Mammary epithelial cell (primary cell): ENCODE measurements at regions of chr1 and their contacts with region 1.

Region 1: DNA sequence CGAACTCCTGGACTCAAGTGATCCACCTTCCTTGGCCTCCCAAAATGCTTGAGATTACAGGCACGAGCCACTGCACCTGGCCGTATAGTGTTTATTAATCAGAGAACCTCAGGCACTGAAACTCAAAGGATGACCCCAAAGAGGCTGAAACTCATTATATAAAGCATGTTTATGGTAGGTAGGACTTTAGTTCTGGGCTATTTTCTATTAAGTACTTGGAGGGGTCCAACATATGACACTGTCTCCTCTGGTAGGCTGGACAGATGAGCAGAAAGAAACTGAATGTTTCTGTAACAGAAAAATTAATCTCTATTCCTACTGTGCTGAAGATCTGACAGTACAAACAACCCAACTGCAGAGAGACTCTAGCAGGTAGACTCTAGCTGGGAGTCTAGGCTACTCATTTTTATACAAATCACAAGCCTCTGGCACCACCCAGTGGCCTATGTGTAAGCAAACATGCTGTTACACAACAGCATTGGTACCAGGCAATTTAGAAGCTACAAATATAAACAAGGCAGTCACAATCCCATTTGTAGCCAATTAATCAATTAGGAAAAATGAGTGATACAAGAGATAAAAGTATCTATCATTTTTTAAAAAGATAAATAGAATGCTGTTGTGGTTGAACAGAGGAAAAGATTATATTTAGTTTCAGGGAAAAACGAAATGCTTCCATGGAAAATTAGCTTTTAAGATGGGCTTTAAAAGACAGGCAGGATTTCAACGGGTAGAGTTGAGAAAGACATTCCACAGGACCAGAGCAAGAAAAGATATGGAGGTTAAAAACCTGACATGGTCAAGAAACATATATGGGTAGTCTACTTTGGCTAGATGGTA is 10.4 kb downstream of the DCAF8 start:
- DNase-seq: peak; percentile 50
- H3K4me3 ChIP-seq: no peak overlapping the region
- H3K27ac ChIP-seq: no peak overlapping the region
- H3K4me1 ChIP-seq: peaks cover 8% of the 10 kb centered on the region
- H3K27me3 ChIP-seq: no peaks in the 10 kb centered on the region
- CTCF ChIP-seq: peak; percentile 81 to 83

Region 2: DNA sequence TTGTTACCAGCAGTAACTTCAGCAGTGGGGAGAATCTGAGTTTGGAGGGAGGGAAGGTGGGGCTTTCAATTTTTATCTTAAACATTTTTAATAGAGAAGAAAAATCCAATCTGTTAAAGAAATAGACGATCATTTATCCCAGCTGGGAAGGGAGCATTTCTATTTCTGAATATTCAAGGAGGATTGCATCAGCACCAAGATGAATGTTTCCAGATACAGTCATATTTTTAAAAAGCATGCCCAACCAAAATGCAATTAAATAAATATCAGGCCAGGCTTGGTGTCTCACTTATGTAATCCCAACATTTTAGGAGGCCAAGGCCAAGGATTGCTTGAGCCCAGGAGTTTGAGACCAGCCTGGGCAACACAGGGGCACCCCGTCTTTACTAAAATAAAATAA is 102.2 kb before region 1 on chr1:
- CTCF ChIA-PET with region 1: no interaction called
- dilution Hi-C with region 1: no loop called
- in situ Hi-C with region 1: no loop called
- intact Hi-C with region 1: no loop called
- DNase-seq: no peak
- H3K4me3 ChIP-seq: no peak overlapping the region
- H3K27ac ChIP-seq: no peak overlapping the region
- H3K4me1 ChIP-seq: no peaks in the 10 kb centered on the region
- H3K27me3 ChIP-seq: no peaks in the 10 kb centered on the region
- CTCF ChIP-seq: no peak

Region 3: GRCh38 chr1:160161965-160162705 is 89.8 kb before region 1 on chr1:
- CTCF ChIA-PET with region 1: no interaction called
- dilution Hi-C with region 1: no loop called
- in situ Hi-C with region 1: no loop called
- intact Hi-C with region 1: loop called (anchors 1 kb)
- DNase-seq: no peak
- H3K4me3 ChIP-seq: no peak overlapping the region
- H3K27ac ChIP-seq: no peak overlapping the region
- H3K4me1 ChIP-seq: no peaks in the 10 kb centered on the region
- H3K27me3 ChIP-seq: no peaks in the 10 kb centered on the region
- CTCF ChIP-seq: peak; percentile 27 to 48

Region 4: GRCh38 chr1:160219062-160219929 is 32.6 kb before region 1 on chr1:
- CTCF ChIA-PET with region 1: interaction called, 7 read pairs
- dilution Hi-C with region 1: loop called (anchors 5 kb)
- in situ Hi-C with region 1: no loop called
- intact Hi-C with region 1: loop called (anchors 1 kb)
- DNase-seq: peak; percentile 71
- H3K4me3 ChIP-seq: no peak overlapping the region
- H3K27ac ChIP-seq: peak overlapping the region; percentile 63
- H3K4me1 ChIP-seq: peaks cover 47% of the 10 kb centered on the region
- H3K27me3 ChIP-seq: no peaks in the 10 kb centered on the region
- CTCF ChIP-seq: peak; percentile 46 to 66

Region 5: GRCh38 chr1:160291248-160292220 is 39.6 kb after region 1 on chr1:
- CTCF ChIA-PET with region 1: no interaction called
- dilution Hi-C with region 1: loop called (anchors 5 kb)
- in situ Hi-C with region 1: no loop called
- intact Hi-C with region 1: no loop called
- DNase-seq: peak; percentile 51
- H3K4me3 ChIP-seq: no peak overlapping the region
- H3K27ac ChIP-seq: no peak overlapping the region
- H3K4me1 ChIP-seq: no peaks in the 10 kb centered on the region
- H3K27me3 ChIP-seq: no peaks in the 10 kb centered on the region
- CTCF ChIP-seq: peak; percentile 78 to 84

Region 6: DNA sequence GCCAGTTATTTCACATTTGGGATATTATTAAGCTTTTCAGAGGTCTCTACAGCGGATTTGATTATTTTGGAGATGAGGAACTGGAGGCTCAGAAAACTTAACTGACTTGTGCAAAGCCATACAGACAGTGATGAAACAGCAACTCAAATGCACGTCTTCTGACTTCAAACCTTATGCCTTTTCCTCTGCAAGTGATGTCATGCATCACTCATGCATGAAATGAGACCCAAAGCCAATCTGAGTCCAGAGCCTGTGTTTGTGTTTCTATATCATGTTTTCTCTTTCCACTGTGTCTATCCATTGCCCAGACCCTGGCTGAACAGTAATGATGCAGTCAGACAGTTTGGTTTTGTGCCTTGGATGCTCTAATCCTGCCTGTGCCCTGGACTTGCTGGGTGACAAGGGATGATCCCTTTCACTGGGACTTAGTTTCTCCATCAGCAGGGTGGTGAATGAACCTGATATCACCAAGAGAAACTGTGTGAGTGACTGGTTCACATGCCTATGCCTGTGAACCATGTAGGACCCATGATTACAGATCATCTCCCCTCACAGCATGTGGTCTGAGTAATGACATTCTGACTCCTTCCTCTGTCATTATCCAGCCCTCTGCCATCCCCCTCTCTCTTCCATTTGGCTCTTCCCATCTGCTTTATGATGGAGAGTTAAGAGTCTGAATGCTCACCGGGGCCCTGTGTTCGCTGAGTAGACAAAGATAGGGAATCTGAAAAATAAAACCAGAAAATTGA is 237.8 kb after region 1 on chr1:
- CTCF ChIA-PET with region 1: no interaction called
- dilution Hi-C with region 1: no loop called
- in situ Hi-C with region 1: no loop called
- intact Hi-C with region 1: no loop called
- DNase-seq: no peak
- H3K4me3 ChIP-seq: no peak overlapping the region
- H3K27ac ChIP-seq: no peak overlapping the region
- H3K4me1 ChIP-seq: no peaks in the 10 kb centered on the region
- H3K27me3 ChIP-seq: no peaks in the 10 kb centered on the region
- CTCF ChIP-seq: no peak

Region 7: GRCh38 chr1:160615660-160616059 is 363.8 kb after region 1 on chr1:
- CTCF ChIA-PET with region 1: interaction called, 14 read pairs
- dilution Hi-C with region 1: no loop called
- in situ Hi-C with region 1: no loop called
- intact Hi-C with region 1: no loop called
- DNase-seq: no peak
- H3K4me3 ChIP-seq: no peak overlapping the region
- H3K27ac ChIP-seq: no peak overlapping the region
- H3K4me1 ChIP-seq: no peaks in the 10 kb centered on the region
- H3K27me3 ChIP-seq: no peaks in the 10 kb centered on the region
- CTCF ChIP-seq: no peak